ENCODE measurements at regions of chr22 and their contacts with region 1.

Region 1: GRCh38 chr22:43658823-43659222 is 153.3 kb downstream of the EFCAB6 start:
- DNase-seq: no peak
- ATAC-seq: no peak
- H3K4me3 Mint-ChIP-seq: no peak overlapping the region
- H3K27ac Mint-ChIP-seq: no peak overlapping the region
- H3K4me1 Mint-ChIP-seq: no peaks in the 10 kb centered on the region
- H3K27me3 Mint-ChIP-seq: no peaks in the 10 kb centered on the region
- CTCF ChIP-seq: no peak

Region 2: GRCh38 chr22:43592476-43592875 is 66.3 kb before region 1 on chr22:
- CTCF ChIA-PET with region 1: no interaction called
- POLR2A ChIA-PET with region 1: no interaction called
- intact Hi-C with region 1: loop called (anchors 10 kb)
- DNase-seq: no peak
- ATAC-seq: no peak
- H3K4me3 Mint-ChIP-seq: no peak overlapping the region
- H3K27ac Mint-ChIP-seq: no peak overlapping the region
- H3K4me1 Mint-ChIP-seq: no peaks in the 10 kb centered on the region
- H3K27me3 Mint-ChIP-seq: peaks cover 4% of the 10 kb centered on the region
- CTCF ChIP-seq: no peak

Region 3: GRCh38 chr22:43848366-43849171 is 189.7 kb after region 1 on chr22:
- CTCF ChIA-PET with region 1: no interaction called
- POLR2A ChIA-PET with region 1: no interaction called
- intact Hi-C with region 1: no loop called
- DNase-seq: no peak
- ATAC-seq: no peak
- H3K4me3 Mint-ChIP-seq: no peak overlapping the region
- H3K27ac Mint-ChIP-seq: no peak overlapping the region
- H3K4me1 Mint-ChIP-seq: no peaks in the 10 kb centered on the region
- H3K27me3 Mint-ChIP-seq: peaks cover 8% of the 10 kb centered on the region
- CTCF ChIP-seq: no peak

Measured in activated B cell treated with CpG ODN at 0.5 μM for 24 hours (primary cell).